ENCODE measurements at regions of chr7 and their contacts with region 1.

Region 1: GRCh38 chr7:151172273-151173141 is 5.0 kb upstream of the GBX1 start:
- DNase-seq: peak; percentile 59 to 88 (median 78)
- ATAC-seq: peak; percentile 97
- H3K4me3 ChIP-seq: no peak overlapping the region
- H3K4me3 Mint-ChIP-seq: no peak overlapping the region
- H3K27ac ChIP-seq: no peak overlapping the region
- H3K27ac Mint-ChIP-seq: peak overlapping the region in 1 of 9 donors; percentile 41
- H3K4me1 ChIP-seq: peaks cover 0 to 3% of the 10 kb centered on the region in 2 donors
- H3K4me1 Mint-ChIP-seq: peaks cover 5 to 16% (median 12%) of the 10 kb centered on the region in 7 donors
- H3K27me3 ChIP-seq: peaks cover 0 to 7% of the 10 kb centered on the region in 2 donors
- H3K27me3 Mint-ChIP-seq: peaks cover 42 to 62% (median 54%) of the 10 kb centered on the region in 5 donors

Region 2: GRCh38 chr7:150778738-150779301 is 393.7 kb before region 1 on chr7:
- CTCF ChIA-PET with region 1: no interaction called
- POLR2A ChIA-PET with region 1: no interaction called
- intact Hi-C with region 1: loop called in 1 of 2 experiments (anchors 2 kb)
- DNase-seq: peak; percentile 31 to 76 (median 60)
- ATAC-seq: peak; percentile 88
- H3K4me3 ChIP-seq: no peak overlapping the region
- H3K4me3 Mint-ChIP-seq: no peak overlapping the region
- H3K27ac ChIP-seq: no peak overlapping the region
- H3K27ac Mint-ChIP-seq: no peak overlapping the region
- H3K4me1 ChIP-seq: no peaks in the 10 kb centered on the region
- H3K4me1 Mint-ChIP-seq: peaks cover 0 to 8% (median 4%) of the 10 kb centered on the region in 7 donors
- H3K27me3 ChIP-seq: no peaks in the 10 kb centered on the region
- H3K27me3 Mint-ChIP-seq: peaks cover 0 to 42% (median 0%) of the 10 kb centered on the region in 5 donors

Region 3: GRCh38 chr7:150962553-150963399 is 209.7 kb before region 1 on chr7:
- CTCF ChIA-PET with region 1: no interaction called
- POLR2A ChIA-PET with region 1: no interaction called
- intact Hi-C with region 1: loop called in 1 of 2 experiments (anchors 5 kb)
- DNase-seq: peak; percentile 31 to 69 (median 53)
- ATAC-seq: peak; percentile 82
- H3K4me3 ChIP-seq: no peak overlapping the region
- H3K4me3 Mint-ChIP-seq: peak overlapping the region in 1 of 10 donors; percentile 51
- H3K27ac ChIP-seq: no peak overlapping the region
- H3K27ac Mint-ChIP-seq: no peak overlapping the region
- H3K4me1 ChIP-seq: no peaks in the 10 kb centered on the region
- H3K4me1 Mint-ChIP-seq: peaks cover 9 to 41% (median 24%) of the 10 kb centered on the region in 7 donors
- H3K27me3 ChIP-seq: no peaks in the 10 kb centered on the region
- H3K27me3 Mint-ChIP-seq: peaks cover 15 to 36% (median 20%) of the 10 kb centered on the region in 5 donors

Region 4: DNA sequence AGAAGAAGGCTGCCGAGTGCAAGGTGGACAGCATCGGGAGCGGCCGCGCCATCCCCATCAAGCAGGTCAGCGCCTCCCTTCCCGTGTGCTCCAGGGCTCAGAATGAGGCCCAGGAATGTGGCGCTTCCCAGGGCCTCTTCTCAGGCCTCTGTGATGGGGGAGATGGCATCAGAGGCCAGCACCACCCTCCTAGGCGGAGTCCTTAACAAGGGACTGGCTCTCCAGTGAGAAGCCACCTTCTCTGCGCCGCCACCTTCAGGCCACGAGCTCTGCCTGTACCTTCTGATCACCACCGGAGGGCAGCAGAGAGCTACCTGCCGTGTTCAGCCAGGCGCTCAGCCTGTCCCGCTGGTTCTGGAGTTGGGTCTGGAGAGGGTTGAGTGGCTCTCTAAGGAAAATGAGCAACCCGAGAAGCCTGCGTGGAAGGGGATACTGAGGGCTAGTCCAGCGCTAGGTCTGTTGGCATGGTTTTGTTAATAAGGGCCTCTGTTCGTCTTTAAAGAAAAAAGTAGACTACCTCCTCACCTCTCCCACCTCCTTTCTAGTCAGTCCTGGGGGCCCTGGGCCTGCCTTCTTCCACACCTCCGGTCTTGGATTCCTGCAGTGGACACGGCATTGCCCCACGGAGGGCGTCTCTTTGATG is 48.6 kb before region 1 on chr7:
- CTCF ChIA-PET with region 1: interaction called, 3 read pairs
- POLR2A ChIA-PET with region 1: no interaction called
- intact Hi-C with region 1: loop called (anchors 1 kb)
- DNase-seq: peak; percentile 61 to 86 (median 77)
- ATAC-seq: peak; percentile 92
- H3K4me3 ChIP-seq: no peak overlapping the region
- H3K4me3 Mint-ChIP-seq: no peak overlapping the region
- H3K27ac ChIP-seq: no peak overlapping the region
- H3K27ac Mint-ChIP-seq: no peak overlapping the region
- H3K4me1 ChIP-seq: no peaks in the 10 kb centered on the region
- H3K4me1 Mint-ChIP-seq: peaks cover 0 to 15% (median 6%) of the 10 kb centered on the region in 7 donors
- H3K27me3 ChIP-seq: no peaks in the 10 kb centered on the region
- H3K27me3 Mint-ChIP-seq: no peaks in the 10 kb centered on the region

Region 5: GRCh38 chr7:151304856-151305255 is 132.3 kb after region 1 on chr7:
- CTCF ChIA-PET with region 1: interaction called, 3 read pairs
- POLR2A ChIA-PET with region 1: no interaction called
- intact Hi-C with region 1: loop called (anchors 1 to 5 kb)
- DNase-seq: no peak
- ATAC-seq: no peak
- H3K4me3 ChIP-seq: no peak overlapping the region
- H3K4me3 Mint-ChIP-seq: peak overlapping the region; percentile 6 to 78 (median 63)
- H3K27ac ChIP-seq: no peak overlapping the region
- H3K27ac Mint-ChIP-seq: no peak overlapping the region
- H3K4me1 ChIP-seq: peaks cover 3 to 6% of the 10 kb centered on the region in 2 donors
- H3K4me1 Mint-ChIP-seq: peaks cover 0 to 21% (median 12%) of the 10 kb centered on the region in 7 donors
- H3K27me3 ChIP-seq: no peaks in the 10 kb centered on the region
- H3K27me3 Mint-ChIP-seq: peaks cover 19 to 46% (median 28%) of the 10 kb centered on the region in 5 donors

Measured in naive thymus-derived CD4-positive, alpha-beta T cell (primary cell).